ENCODE measurements at regions of chr12 and their contacts with region 1.

Region 1: DNA sequence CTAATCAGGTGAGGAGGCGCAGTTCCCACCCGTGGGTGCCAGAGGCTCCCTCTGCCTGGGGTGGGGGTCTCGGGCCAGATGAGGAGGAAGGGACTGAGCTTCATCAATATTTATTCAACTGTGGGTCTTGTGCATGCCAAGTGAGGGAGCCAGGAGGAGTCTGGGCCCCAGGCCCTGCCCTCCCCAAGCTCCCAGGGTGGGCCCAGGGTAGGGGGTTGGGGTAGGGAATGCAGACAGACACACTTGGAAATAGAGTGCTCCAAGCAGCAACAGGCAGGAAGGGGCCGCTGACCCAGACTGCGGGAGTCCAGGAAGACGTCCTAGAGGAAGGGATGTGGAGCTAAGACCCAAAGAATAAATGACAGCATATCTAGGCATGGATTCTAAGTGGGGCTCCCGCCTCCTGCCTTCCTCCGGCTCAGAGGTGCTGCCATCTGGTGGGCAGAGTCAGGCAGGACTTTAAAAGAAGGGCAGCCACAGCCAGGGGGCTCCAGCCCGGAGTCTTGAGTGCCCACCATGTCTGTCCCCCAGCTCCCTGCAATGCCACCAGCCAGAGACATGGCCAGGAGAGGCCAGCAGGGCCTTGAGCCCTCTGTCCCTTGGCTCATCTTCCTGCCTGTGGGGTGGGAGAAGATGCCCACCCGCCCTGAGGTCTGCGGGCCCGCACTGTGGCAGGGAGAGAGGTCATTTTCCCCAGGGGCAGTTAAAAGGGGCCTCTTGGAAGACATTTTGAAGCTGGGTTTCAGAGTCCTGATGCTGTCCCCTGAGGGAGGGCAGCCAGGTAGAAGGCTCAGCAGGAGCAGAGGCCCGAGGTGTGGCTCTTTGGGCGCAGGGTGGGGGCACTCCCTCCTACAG is 70.1 kb downstream of the PHETA1 start:
- DNase-seq: peak; percentile 18 to 62 (median 52)
- H3K4me3 ChIP-seq: no peak overlapping the region
- H3K27ac ChIP-seq: no peak overlapping the region
- H3K4me1 ChIP-seq: no peaks in the 10 kb centered on the region
- H3K27me3 ChIP-seq: peaks cover 4% of the 10 kb centered on the region
- CTCF ChIP-seq: peak; percentile 58 to 83 (median 70)
- POLR2A ChIP-seq: no peak

Region 2: DNA sequence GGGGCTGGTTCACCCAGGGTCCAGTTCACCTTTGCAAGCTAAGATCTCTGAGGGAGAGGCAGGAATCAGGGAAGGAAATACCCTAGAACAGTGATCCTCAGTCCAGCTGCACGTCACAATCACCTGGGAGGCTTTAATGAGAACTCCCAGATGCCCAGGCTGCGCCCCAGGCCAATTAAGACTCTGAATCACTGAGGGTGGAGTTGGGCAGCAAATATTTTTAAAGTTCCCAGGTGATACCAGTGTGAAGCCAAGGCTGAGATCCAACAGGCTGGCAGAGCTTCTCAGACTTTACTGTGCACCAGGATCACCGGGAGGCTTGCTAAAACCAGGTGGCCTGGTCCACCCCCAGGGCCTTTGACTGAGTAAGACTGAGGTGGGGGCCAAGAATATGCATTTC is 402.2 kb before region 1 on chr12:
- intact Hi-C with region 1: loop called in 1 of 2 experiments (anchors 10 kb)
- DNase-seq: no peak
- H3K4me3 ChIP-seq: no peak overlapping the region
- H3K27ac ChIP-seq: no peak overlapping the region
- H3K4me1 ChIP-seq: peaks cover 0 to 4% of the 10 kb centered on the region in 2 donors
- H3K27me3 ChIP-seq: no peaks in the 10 kb centered on the region
- CTCF ChIP-seq: no peak
- POLR2A ChIP-seq: no peak

Region 3: DNA sequence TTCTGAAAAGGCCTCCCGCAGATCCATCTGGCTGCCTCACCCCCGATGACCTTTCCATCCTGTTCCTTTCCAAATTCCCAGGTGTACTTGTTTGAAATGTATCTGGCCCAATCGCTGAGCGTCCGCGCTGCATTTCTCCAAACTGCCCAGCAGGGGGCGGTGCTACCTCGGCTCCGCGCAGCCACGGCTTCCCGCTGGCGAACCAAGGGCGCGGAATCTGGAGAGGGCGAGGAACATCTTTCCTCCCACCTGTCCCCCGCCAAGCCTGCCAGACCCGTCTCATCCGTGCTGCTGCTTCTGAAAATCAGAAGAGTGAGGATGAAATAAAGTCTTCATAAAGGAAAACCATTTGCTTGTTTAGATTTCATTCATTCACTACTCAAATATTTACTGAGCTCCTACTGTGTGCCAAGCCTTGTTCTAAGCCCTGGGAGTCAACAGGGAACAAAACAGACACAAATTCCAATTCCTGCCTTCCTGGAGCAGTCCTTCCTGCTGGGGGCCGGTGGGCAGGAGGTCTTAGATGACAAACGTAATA is 361.6 kb before region 1 on chr12:
- intact Hi-C with region 1: loop called in 1 of 2 experiments (anchors 5 kb)
- DNase-seq: peak; percentile 35 to 69 (median 45)
- H3K4me3 ChIP-seq: no peak overlapping the region
- H3K27ac ChIP-seq: no peak overlapping the region
- H3K4me1 ChIP-seq: no peaks in the 10 kb centered on the region
- H3K27me3 ChIP-seq: peaks cover 11% of the 10 kb centered on the region
- CTCF ChIP-seq: peak; percentile 74 to 93 (median 82)
- POLR2A ChIP-seq: no peak

Region 4: GRCh38 chr12:111024205-111024801 is 274.5 kb before region 1 on chr12:
- intact Hi-C with region 1: loop called in 1 of 2 experiments (anchors 10 kb)
- DNase-seq: peak; percentile 33 to 70 (median 55)
- H3K4me3 ChIP-seq: no peak overlapping the region
- H3K27ac ChIP-seq: no peak overlapping the region
- H3K4me1 ChIP-seq: no peaks in the 10 kb centered on the region
- H3K27me3 ChIP-seq: peaks cover 7% of the 10 kb centered on the region
- CTCF ChIP-seq: peak; percentile 50 to 79 (median 74)
- POLR2A ChIP-seq: no peak

Region 5: DNA sequence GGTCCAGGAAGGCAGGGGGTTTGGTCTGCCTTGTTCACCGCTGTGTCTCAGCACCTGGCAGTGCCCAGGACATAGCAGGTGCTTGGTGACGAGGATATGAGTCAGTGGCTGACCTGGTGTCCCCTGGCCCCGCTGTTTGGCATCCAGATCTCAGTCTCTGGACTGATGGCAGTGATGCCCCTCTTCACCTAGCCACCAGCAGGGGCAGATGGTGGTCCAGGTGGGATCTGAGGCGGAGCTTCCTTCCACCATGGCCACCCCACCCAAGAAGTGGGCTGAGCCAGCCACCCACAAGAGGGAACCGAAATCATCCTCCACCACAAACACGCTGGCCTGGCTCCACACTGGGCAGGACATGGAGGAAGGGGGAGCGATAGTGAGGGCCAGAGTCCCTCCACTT is 90.8 kb after region 1 on chr12:
- intact Hi-C with region 1: no loop called
- DNase-seq: no peak
- H3K4me3 ChIP-seq: no peak overlapping the region
- H3K27ac ChIP-seq: no peak overlapping the region
- H3K4me1 ChIP-seq: no peaks in the 10 kb centered on the region
- H3K27me3 ChIP-seq: no peaks in the 10 kb centered on the region
- CTCF ChIP-seq: no peak
- POLR2A ChIP-seq: no peak